ENCODE measurements at regions of chr6 and their contacts with region 1.

Region 1: GRCh38 chr6:28136585-28137504 is 4.8 kb upstream of the ZKSCAN8 start:
- DNase-seq: peak; percentile 91 to 92
- H3K4me3 ChIP-seq: peak overlapping the region; percentile 65 to 93 (median 83)
- H3K27ac ChIP-seq: peak overlapping the region; percentile 81 to 95 (median 87)
- H3K4me1 ChIP-seq: peaks cover 11 to 15% of the 10 kb centered on the region in 2 donors
- H3K27me3 ChIP-seq: no peaks in the 10 kb centered on the region
- CTCF ChIP-seq: no peak
- POLR2A ChIP-seq: peak in 1 of 2 donors; percentile 23

Region 2: GRCh38 chr6:28218271-28219248 is 81.7 kb after region 1 on chr6:
- intact Hi-C with region 1: loop called (anchors 10 kb)
- DNase-seq: peak; percentile 74 to 75
- H3K4me3 ChIP-seq: peak overlapping the region in 2 of 3 donors; percentile 45 to 46
- H3K27ac ChIP-seq: peak overlapping the region in 2 of 3 donors; percentile 53 to 60
- H3K4me1 ChIP-seq: peaks cover 0 to 3% of the 10 kb centered on the region in 2 donors
- H3K27me3 ChIP-seq: no peaks in the 10 kb centered on the region
- CTCF ChIP-seq: no peak
- POLR2A ChIP-seq: peak in 1 of 2 donors; percentile 12

Measured in thyroid gland (tissue), 4 donors.